ENCODE measurements at regions of chr17 and their contacts with region 1.

Region 1: GRCh38 chr17:8173056-8173870 is 2.9 kb downstream of the TMEM107 start:
- DNase-seq: peak; percentile 45 to 93 (median 62)
- ATAC-seq: peak; percentile 80
- H3K4me3 ChIP-seq: peak overlapping the region; percentile 27
- H3K27ac ChIP-seq: peak overlapping the region; percentile 99
- H3K4me1 ChIP-seq: peaks cover 23 to 56% of the 10 kb centered on the region in 2 experiments; a peak in 4 of 5 replicates
- H3K27me3 ChIP-seq: no peaks in the 10 kb centered on the region
- CTCF ChIP-seq: peak in 1 of 3 experiments; percentile 8; a peak in 2 of 6 replicates
- EP300 ChIP-seq: peak; percentile 70
- POLR2A ChIP-seq: peak; percentile 100
- RAD21 ChIP-seq: peak in 1 of 2 experiments; percentile 37; a peak in 3 of 4 replicates

Region 2: DNA sequence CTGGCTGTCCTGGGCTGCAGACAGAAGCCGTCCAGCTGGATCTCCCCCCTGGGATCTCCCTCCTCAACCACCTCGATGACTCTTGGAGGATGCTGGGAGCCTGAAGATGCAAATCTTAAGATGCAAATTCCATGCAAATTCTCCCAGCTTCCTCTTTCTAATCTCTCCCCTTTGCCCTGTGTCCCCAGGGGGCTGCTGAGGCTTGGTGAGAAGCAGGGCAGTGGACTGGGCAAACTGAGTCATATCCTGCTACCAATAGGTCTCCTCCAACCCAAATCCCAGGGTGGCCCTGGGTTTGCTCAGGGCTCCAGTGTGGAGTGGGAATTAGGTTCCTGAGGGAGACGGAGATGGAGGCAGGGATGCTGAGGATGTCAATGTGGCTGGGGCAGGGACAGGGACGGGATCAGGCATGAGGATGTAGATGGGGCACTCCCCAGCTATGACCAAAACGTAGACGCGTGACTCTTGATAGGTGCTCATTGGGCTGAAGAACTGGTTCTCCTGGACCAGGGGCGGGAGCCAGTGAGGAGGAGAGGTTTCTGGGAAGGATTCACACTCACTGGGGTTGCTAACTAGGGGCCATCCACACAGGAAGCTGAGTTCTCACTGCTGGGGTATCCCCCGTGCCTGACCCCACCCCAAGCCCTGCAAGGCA is 82.1 kb before region 1 on chr17:
- CTCF ChIA-PET with region 1: no interaction called
- POLR2A ChIA-PET with region 1: no interaction called
- in situ Hi-C with region 1: no loop called
- intact Hi-C with region 1: no loop called
- DNase-seq: no peak
- ATAC-seq: no peak
- H3K4me3 ChIP-seq: no peak overlapping the region
- H3K27ac ChIP-seq: no peak overlapping the region
- H3K4me1 ChIP-seq: peaks cover 0 to 6% of the 10 kb centered on the region in 2 experiments; a peak in 2 of 5 replicates
- H3K27me3 ChIP-seq: peaks cover 3 to 26% of the 10 kb centered on the region in 2 experiments; a peak in 2 of 5 replicates
- CTCF ChIP-seq: no peak
- EP300 ChIP-seq: no peak
- POLR2A ChIP-seq: no peak
- RAD21 ChIP-seq: no peak

Region 3: GRCh38 chr17:8126531-8127066 is 46.7 kb before region 1 on chr17:
- CTCF ChIA-PET with region 1: no interaction called
- POLR2A ChIA-PET with region 1: interaction called, 10 read pairs
- in situ Hi-C with region 1: no loop called
- intact Hi-C with region 1: loop called (anchors 5 kb)
- DNase-seq: peak; percentile 66 to 74 (median 70)
- ATAC-seq: peak; percentile 45
- H3K4me3 ChIP-seq: peak overlapping the region; percentile 73
- H3K27ac ChIP-seq: peak overlapping the region; percentile 34; the same call in 1 of the 3 replicates
- H3K4me1 ChIP-seq: peaks cover 22 to 60% of the 10 kb centered on the region in 2 experiments
- H3K27me3 ChIP-seq: 0 out of 5 replicates have a peak, but pooled peaks cover 0 to 9% of the 10 kb centered on the region in 2 experiments
- CTCF ChIP-seq: no peak
- EP300 ChIP-seq: no peak
- POLR2A ChIP-seq: no peak
- RAD21 ChIP-seq: no peak

Region 4: DNA sequence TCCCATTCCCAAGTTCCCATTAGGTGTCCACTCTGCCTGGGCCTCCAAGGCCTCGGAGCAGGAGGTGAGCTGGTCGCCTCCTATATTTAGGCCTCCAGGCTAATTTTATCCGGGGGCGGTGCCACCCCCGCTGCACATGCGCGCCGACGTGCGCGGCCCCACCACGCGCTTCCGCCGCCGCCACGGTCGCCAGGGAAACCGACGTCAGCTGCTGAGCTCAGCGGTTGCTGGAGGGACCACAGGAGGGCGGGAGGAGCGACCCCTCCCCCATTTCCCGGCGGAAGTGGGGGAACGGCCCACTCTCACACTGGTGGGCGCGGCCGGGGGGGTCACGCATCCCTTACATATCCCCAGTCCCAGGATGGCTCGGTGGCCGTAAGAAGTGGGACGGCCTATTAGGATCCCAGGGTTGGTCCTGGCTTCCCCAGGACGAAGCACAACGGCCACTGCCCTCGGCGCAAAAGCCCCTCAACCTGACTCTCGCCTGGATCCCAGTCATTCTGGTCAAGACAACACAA is 22.1 kb before region 1 on chr17:
- CTCF ChIA-PET with region 1: no interaction called
- POLR2A ChIA-PET with region 1: interaction called, 105 read pairs
- in situ Hi-C with region 1: no loop called
- intact Hi-C with region 1: no loop called
- DNase-seq: peak; percentile 69 to 88 (median 72)
- ATAC-seq: peak; percentile 69
- H3K4me3 ChIP-seq: peak overlapping the region; percentile 53
- H3K27ac ChIP-seq: peak overlapping the region; percentile 78
- H3K4me1 ChIP-seq: peaks cover 31 to 67% of the 10 kb centered on the region in 2 experiments
- H3K27me3 ChIP-seq: no peaks in the 10 kb centered on the region
- CTCF ChIP-seq: no peak
- EP300 ChIP-seq: no peak
- POLR2A ChIP-seq: no peak; the same call in 1 of the 2 replicates
- RAD21 ChIP-seq: no peak

Region 5: GRCh38 chr17:8189711-8190477 is 16.6 kb after region 1 on chr17 and contains the start of gene BORCS6:
- CTCF ChIA-PET with region 1: no interaction called
- POLR2A ChIA-PET with region 1: interaction called, 27 read pairs
- in situ Hi-C with region 1: no loop called
- intact Hi-C with region 1: no loop called
- DNase-seq: peak; percentile 72 to 97 (median 82)
- ATAC-seq: peak; percentile 80
- H3K4me3 ChIP-seq: peak within 1 kb of the TSS; percentile 88
- H3K27ac ChIP-seq: peak within 1 kb of the TSS; percentile 85
- H3K4me1 ChIP-seq: peaks cover 31 to 39% of the 10 kb centered on the region in 2 experiments
- H3K27me3 ChIP-seq: no peaks in the 10 kb centered on the region
- CTCF ChIP-seq: peak in 1 of 3 experiments; percentile 0; a peak in 1 of 6 replicates
- EP300 ChIP-seq: no peak
- POLR2A ChIP-seq: peak; percentile 73
- RAD21 ChIP-seq: no peak
- polyA plus RNA-seq, gene BORCS6: 0.01 to 0.08 TPM

Region 6: GRCh38 chr17:8209909-8210760 is 36.9 kb after region 1 on chr17 and contains the start of gene AURKB:
- CTCF ChIA-PET with region 1: no interaction called
- POLR2A ChIA-PET with region 1: interaction called, 13 read pairs
- in situ Hi-C with region 1: no loop called
- intact Hi-C with region 1: no loop called
- DNase-seq: peak; percentile 85 to 95 (median 88)
- ATAC-seq: peak; percentile 92
- H3K4me3 ChIP-seq: peak within 1 kb of the TSS; percentile 73
- H3K27ac ChIP-seq: peak within 1 kb of the TSS; percentile 94
- H3K4me1 ChIP-seq: peaks cover 17 to 25% of the 10 kb centered on the region in 2 experiments; a peak in 4 of 5 replicates
- H3K27me3 ChIP-seq: no peaks in the 10 kb centered on the region
- CTCF ChIP-seq: no peak
- EP300 ChIP-seq: no peak
- POLR2A ChIP-seq: peak; percentile 95
- RAD21 ChIP-seq: no peak
- polyA plus RNA-seq, gene AURKB: 63.4 to 101 TPM

Measured in K562 (cell line).